Activated B cell treated with CpG ODN at 0.5 μM for 24 hours (primary cell): ENCODE measurements at regions of chr10 and their contacts with region 1.

Region 1: DNA sequence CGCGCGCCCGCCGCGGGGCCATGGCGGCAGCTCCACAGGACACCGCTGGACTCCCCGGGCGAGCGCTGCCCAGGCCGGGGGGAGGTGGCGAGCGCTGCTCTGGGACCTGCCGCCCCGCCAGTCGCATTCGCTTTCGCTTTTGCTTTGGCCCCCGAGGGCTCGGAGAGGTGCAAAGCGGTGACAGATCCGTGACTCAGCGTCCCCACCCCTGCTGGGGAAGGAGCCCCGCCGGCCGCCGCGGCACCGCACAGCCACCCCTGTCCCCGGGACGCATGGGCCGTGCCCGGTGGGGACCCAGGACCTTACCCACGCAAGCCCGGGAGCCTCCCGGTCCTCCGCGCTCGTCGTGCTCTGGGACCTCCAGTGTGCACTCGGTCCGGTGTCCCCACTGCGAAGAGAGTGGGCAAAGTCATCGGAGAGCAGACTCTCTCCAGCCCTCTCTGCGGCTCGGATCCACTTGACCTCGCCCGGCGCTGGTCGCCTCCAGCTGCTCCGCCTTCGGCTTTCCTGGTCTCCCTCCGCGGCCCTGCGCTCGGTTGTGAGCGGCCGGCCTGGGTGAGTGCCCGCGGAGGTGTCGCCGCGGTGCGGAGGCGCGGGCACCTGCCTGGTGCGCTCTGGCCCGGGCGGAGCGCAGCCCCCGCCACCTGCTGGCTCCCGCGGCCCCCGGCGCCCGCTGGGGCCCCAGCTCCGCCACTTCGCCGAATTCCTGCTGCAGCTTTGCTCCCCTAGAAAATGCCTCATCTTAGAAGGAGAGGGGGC is at the start of gene IL15RA:
- DNase-seq: peak; percentile 75
- ATAC-seq: peak; percentile 70
- H3K4me3 Mint-ChIP-seq: peak within 1 kb of the TSS; percentile 96
- H3K27ac Mint-ChIP-seq: peak within 1 kb of the TSS; percentile 91
- H3K4me1 Mint-ChIP-seq: peaks cover 41% of the 10 kb centered on the region
- H3K27me3 Mint-ChIP-seq: no peaks in the 10 kb centered on the region
- CTCF ChIP-seq: no peak
- total RNA-seq, gene IL15RA: 19.1 and 19.8 TPM in 2 replicates

Region 2: DNA sequence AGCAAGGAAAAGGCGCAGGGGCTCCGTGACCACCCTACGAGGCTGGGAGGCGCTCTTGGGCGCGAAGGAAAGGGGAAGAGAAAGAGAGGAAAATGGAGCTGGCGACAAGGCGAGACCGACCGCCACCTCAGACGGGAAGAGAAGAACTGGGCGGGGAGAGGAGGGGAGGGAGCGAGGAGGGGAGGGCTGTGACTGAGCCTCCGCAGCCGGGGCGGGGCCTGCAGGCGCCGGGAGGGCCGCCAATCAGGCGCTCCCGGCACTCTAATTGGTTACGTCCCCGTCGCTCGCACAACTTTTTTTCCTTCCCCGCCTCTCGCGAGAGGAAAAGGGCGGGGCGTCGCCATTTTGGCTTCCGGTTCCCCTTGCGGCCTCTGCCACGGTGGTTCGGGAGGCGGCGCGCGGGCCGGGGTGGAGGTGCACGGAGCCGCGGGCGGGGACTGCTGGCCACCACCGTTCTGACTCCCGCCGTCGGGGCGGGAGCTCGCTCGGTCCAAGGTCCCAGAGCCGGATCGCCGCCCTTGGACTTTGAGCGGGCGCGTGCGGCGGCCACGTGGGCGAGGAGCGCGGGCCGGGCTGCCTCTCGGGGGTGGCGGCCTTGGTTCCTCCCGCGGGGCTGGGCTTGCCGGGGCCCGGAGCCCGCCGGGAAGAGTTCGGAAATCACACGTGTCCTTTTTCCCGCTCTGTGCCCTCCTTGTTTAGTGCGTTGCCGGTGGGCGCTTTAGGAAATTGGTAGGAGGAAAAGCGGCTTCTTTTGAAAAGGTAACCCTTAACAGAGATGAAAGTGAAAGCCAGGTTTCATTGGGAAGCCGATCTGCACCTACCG is 164.2 kb before region 1 on chr10 and contains the start of gene GDI2:
- CTCF ChIA-PET with region 1: no interaction called
- POLR2A ChIA-PET with region 1: interaction called, 8 read pairs
- intact Hi-C with region 1: loop called (anchors 1 kb)
- DNase-seq: peak; percentile 96
- ATAC-seq: peak; percentile 82
- H3K4me3 Mint-ChIP-seq: peak within 1 kb of the TSS; percentile 91
- H3K27ac Mint-ChIP-seq: peak within 1 kb of the TSS; percentile 94
- H3K4me1 Mint-ChIP-seq: peaks cover 79% of the 10 kb centered on the region
- H3K27me3 Mint-ChIP-seq: no peaks in the 10 kb centered on the region
- CTCF ChIP-seq: no peak
- total RNA-seq, gene GDI2: 289 and 301 TPM in 2 replicates

Region 3: DNA sequence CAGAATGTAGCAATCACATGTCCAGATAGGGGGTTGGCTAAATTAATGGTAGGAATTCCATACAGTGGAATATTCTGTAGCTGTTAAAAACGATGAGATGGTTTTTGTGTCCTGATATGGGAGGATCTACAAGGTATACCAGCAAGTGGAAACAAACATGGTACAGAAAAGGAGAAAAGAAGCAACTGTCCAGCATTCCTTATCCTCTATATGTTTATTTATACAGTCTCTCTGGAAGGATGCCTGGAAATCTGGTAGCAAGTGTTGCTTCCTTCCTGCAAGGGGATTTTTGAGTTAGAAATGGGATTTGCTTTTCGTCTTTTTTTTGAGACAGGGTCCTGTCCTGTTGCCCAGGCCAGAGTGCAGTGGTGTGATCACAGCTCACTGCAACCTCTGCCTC is 19.6 kb before region 1 on chr10:
- CTCF ChIA-PET with region 1: no interaction called
- POLR2A ChIA-PET with region 1: no interaction called
- intact Hi-C with region 1: no loop called
- DNase-seq: no peak
- ATAC-seq: no peak
- H3K4me3 Mint-ChIP-seq: no peak overlapping the region
- H3K27ac Mint-ChIP-seq: no peak overlapping the region
- H3K4me1 Mint-ChIP-seq: no peaks in the 10 kb centered on the region
- H3K27me3 Mint-ChIP-seq: no peaks in the 10 kb centered on the region
- CTCF ChIP-seq: no peak

Region 4: GRCh38 chr10:5987747-5988146 is 10.1 kb after region 1 on chr10:
- CTCF ChIA-PET with region 1: no interaction called
- POLR2A ChIA-PET with region 1: interaction called, 8 read pairs
- intact Hi-C with region 1: loop called (anchors 1 kb)
- DNase-seq: no peak
- ATAC-seq: peak; percentile 90
- H3K4me3 Mint-ChIP-seq: peak overlapping the region; percentile 6
- H3K27ac Mint-ChIP-seq: peak overlapping the region; percentile 62
- H3K4me1 Mint-ChIP-seq: peaks cover 10% of the 10 kb centered on the region
- H3K27me3 Mint-ChIP-seq: no peaks in the 10 kb centered on the region
- CTCF ChIP-seq: no peak

Region 5: DNA sequence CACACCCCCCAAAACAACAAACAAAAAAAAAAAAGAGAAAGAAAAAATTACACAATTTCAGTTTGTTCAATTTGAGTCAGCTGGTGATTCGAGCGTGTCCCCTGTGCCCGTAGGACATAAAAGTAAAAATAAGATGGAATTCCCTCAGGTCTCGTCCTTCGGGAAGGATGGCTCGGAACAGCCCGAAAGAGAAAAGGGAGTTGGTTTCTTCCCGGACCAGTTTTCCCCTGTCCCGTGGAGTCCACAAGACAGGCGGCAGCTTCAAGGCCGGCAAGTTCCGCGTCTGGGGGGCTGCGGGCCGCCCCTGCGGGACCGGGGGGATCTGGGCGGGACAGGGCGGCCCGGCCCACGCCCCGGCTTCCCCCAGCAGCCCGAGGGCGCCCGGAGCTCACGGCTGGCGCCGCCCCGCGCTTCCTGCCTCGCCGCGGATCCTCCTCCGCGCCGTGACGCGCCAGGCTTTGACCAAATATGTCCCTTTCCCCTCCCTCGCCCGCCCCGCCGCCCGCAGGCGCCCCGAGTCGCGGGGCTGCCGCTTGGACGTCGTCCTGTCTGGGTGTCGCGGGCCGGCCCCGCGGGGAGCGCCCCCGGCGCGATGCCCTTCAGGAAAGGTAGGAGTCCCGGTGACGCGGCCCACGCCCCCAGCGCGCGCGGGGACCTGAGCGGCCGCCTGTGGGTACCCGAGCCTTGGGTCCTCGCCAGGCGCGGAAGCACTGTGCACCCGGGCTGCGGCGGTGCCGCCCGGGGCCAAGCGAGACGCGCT is 166.9 kb after region 1 on chr10:
- CTCF ChIA-PET with region 1: no interaction called
- POLR2A ChIA-PET with region 1: no interaction called
- intact Hi-C with region 1: loop called (anchors 2 kb)
- DNase-seq: peak; percentile 85
- ATAC-seq: peak; percentile 86
- H3K4me3 Mint-ChIP-seq: peak overlapping the region; percentile 88
- H3K27ac Mint-ChIP-seq: peak overlapping the region; percentile 77
- H3K4me1 Mint-ChIP-seq: peaks cover 66% of the 10 kb centered on the region
- H3K27me3 Mint-ChIP-seq: no peaks in the 10 kb centered on the region
- CTCF ChIP-seq: no peak

Region 6: GRCh38 chr10:7787857-7788638 is 1810.4 kb after region 1 on chr10 and contains the starts of genes ATP5F1C and KIN:
- CTCF ChIA-PET with region 1: no interaction called
- POLR2A ChIA-PET with region 1: no interaction called
- intact Hi-C with region 1: loop called (anchors 10 kb)
- DNase-seq: peak; percentile 93
- ATAC-seq: peak; percentile 97
- H3K4me3 Mint-ChIP-seq: no peak within 1 kb of the TSS
- H3K27ac Mint-ChIP-seq: no peak within 1 kb of the TSS
- H3K4me1 Mint-ChIP-seq: peaks cover 51% of the 10 kb centered on the region
- H3K27me3 Mint-ChIP-seq: no peaks in the 10 kb centered on the region
- CTCF ChIP-seq: no peak
- total RNA-seq, gene ATP5F1C: 177 and 182 TPM in 2 replicates
- total RNA-seq, gene KIN: 12.6 and 13.1 TPM in 2 replicates